ENCODE measurements at regions of chr6 and their contacts with region 1.

Region 1: GRCh38 chr6:10404107-10404798 is 10.6 kb downstream of the TFAP2A start:
- H3K4me3 ChIP-seq: peak overlapping the region; percentile 60
- H3K27ac ChIP-seq: peak overlapping the region; percentile 91
- H3K4me1 ChIP-seq: peaks cover 38% of the 10 kb centered on the region
- CTCF ChIP-seq: peak; percentile 65

Region 2: GRCh38 chr6:10332121-10332520 is 72.1 kb before region 1 on chr6:
- CTCF ChIA-PET with region 1: no interaction called
- POLR2A ChIA-PET with region 1: no interaction called
- H3K4me3 ChIP-seq: no peak overlapping the region
- H3K27ac ChIP-seq: no peak overlapping the region
- H3K4me1 ChIP-seq: no peaks in the 10 kb centered on the region
- CTCF ChIP-seq: no peak

Region 3: GRCh38 chr6:10418928-10419748 is 14.9 kb after region 1 on chr6:
- CTCF ChIA-PET with region 1: no interaction called
- POLR2A ChIA-PET with region 1: interaction called, 97 read pairs
- H3K4me3 ChIP-seq: peak overlapping the region; percentile 54
- H3K27ac ChIP-seq: peak overlapping the region; percentile 79
- H3K4me1 ChIP-seq: peaks cover 16% of the 10 kb centered on the region
- CTCF ChIP-seq: no peak